ENCODE measurements at regions of chr11 and their contacts with region 1.

Region 1: GRCh38 chr11:86456052-86456939 is 81.6 kb downstream of the CCDC81 start:
- ATAC-seq: peak; percentile 80 to 97 (median 96)
- H3K4me3 ChIP-seq: no peak overlapping the region
- H3K27ac ChIP-seq: no peak overlapping the region
- H3K4me1 ChIP-seq: peaks cover 3 to 12% of the 10 kb centered on the region in 2 donors

Region 2: DNA sequence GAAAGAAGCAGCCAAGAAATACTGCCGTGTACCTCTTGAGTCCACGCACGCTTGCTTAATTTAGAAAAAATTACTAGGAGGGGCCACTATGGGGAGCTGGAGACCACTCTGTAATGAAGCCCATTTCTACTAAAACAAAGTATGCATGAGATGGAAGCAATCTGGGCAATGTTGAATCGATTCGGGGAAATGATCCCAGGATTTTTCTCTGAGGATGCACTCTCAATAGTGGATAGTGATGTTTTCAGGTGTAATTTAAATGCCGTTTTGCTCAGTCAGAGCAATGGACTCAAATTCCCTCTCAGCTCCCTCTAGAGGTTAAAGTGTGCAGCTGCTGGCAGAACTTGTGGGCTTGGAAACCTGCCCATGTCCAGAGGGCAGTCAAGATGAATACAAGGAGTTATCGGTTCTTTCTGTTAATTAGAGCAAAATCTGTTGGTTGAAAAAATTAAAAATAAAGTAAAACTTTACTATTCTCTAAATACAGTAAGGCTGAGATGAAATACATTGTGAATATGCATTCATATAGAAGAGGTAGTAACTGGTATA is 152.0 kb after region 1 on chr11:
- in situ Hi-C with region 1: loop called in 1 of 9 experiments (anchors 25 kb)
- ATAC-seq: peak in 4 of 8 experiments; percentile 29 to 88 (median 40)
- H3K4me3 ChIP-seq: no peak overlapping the region
- H3K27ac ChIP-seq: no peak overlapping the region
- H3K4me1 ChIP-seq: peaks cover 0 to 5% of the 10 kb centered on the region in 2 donors

Region 3: GRCh38 chr11:86802601-86803051 is 346.3 kb after region 1 on chr11:
- in situ Hi-C with region 1: loop called in 4 of 9 experiments (anchors 10 to 25 kb)
- ATAC-seq: peak in 5 of 8 experiments; percentile 6 to 28 (median 9)
- H3K4me3 ChIP-seq: peak overlapping the region in 2 of 5 donors; percentile 1 to 50
- H3K27ac ChIP-seq: no peak overlapping the region
- H3K4me1 ChIP-seq: peaks cover 35 to 46% of the 10 kb centered on the region in 2 donors

Measured in motor neuron (in vitro differentiated cells).